ENCODE measurements at regions of chr19 and their contacts with region 1.

Region 1: GRCh38 chr19:42108527-42109389 is 23.5 kb downstream of the POU2F2 start:
- DNase-seq: peak; percentile 95
- H3K4me3 ChIP-seq: peak overlapping the region; percentile 46
- H3K27ac ChIP-seq: peak overlapping the region; percentile 87
- H3K4me1 ChIP-seq: peaks cover 60% of the 10 kb centered on the region
- CTCF ChIP-seq: peak; percentile 100

Region 2: DNA sequence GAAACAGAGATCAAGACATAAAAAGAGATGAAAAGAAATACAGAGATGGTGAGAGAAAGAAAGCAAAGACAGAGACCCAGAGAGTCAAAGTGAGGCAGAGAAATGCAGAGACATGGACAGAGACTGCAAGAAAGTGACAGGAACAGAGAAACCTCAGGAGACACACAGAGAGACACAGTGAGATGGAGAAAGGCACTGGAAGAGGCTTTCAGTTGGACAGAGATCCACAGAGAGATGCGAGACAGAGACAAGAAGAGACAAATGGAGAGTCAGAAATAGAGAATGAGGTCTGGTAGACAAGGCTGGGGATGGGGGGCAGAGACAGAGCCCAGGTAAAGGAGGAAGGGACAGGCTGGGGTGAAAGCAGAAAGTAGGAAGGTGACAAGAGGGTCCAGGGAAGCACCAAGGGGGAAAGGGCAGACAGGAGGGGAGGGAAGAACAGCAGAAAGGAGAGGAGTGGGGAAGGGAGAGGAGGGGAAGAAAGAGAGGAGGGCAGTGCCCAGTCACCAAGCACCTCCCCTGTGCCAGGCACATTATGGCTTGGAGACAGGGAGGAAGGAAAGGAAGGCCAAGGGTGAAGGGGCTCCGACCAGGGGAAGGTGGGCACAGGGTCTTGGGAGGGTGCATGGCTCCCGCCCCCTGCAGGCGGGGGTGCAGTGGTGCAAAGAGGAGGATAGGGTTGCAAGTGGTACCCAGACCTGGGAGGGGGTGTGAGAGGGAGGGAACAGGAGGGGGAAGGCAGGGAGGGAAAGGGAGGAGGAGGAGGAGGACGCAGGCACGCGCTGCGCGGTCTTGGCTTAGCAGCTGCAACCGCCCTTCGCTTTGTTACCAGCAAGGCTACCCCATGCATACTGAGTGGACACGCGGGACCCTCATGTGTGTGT is 70.3 kb after region 1 on chr19:
- CTCF ChIA-PET with region 1: interaction called, 5 read pairs
- POLR2A ChIA-PET with region 1: no interaction called
- intact Hi-C with region 1: loop called (anchors 1 kb)
- DNase-seq: peak; percentile 56
- H3K4me3 ChIP-seq: no peak overlapping the region
- H3K27ac ChIP-seq: no peak overlapping the region
- H3K4me1 ChIP-seq: peaks cover 48% of the 10 kb centered on the region
- CTCF ChIP-seq: peak; percentile 76

Region 3: DNA sequence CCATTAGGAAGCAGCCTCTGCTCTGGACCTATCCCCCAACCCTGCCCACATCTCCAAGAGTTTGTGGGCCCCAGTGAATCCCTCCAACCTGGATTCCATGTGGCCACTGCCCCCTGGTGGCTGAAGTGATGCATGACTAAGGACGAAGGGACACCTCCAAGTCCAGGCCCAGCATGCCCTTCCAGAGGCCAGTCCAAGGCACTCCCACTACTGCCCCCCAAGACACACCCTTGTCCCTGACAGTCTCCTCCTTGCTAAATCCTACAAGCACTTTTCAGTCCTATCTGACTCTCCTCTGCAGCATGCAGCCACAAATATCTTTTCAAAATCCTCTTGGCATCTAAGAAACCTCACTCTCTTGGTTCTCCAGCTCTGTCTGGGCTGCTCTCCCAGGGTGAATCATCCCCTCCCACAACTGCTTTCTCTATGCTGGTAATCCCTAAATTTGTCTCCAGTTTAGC is 75.7 kb after region 1 on chr19:
- CTCF ChIA-PET with region 1: no interaction called
- POLR2A ChIA-PET with region 1: no interaction called
- intact Hi-C with region 1: loop called (anchors 1 kb)
- DNase-seq: peak; percentile 82
- H3K4me3 ChIP-seq: no peak overlapping the region
- H3K27ac ChIP-seq: no peak overlapping the region
- H3K4me1 ChIP-seq: peaks cover 39% of the 10 kb centered on the region
- CTCF ChIP-seq: peak; percentile 99

Region 4: DNA sequence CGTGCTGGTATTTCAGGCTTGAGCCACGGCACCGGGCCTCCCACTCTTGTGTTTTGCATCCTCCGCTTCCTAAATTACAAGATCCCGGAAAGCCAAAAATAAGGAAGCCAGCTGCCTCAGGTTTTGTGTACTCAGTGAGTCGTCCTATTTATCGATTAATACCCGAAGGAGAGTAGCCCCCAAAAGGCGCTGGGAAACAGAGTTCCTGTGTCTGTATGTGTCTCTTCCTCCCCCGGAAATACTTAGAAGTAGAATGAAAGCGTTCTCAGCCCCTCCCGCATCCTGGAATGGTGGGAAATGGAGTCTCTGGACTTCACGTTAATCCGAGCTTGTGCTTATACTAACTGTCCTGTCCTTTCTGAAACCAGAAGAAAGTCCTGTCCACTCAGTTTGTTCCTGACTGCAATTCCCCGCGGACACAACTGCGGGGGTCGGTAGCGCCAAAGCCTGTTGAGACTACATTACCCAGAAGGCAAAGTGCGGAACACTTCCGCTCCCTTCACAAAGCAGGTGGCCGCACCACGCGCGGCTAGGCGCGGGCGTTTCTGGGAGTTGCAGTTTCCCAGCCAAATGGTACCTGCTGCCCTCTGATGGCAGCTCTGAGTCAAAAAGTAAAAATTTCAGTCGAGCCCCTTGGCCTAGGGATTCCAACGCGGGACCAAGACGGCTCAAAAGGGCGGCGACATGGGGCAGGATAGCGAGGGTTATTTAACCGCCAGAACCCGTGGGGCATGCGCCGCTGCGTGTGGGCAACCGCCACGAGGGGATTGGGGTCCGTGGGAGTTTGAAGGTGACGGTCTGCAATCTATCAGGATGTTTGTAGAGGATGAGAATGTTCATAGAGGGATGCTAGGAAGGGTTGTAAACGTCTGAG is 135.8 kb after region 1 on chr19:
- CTCF ChIA-PET with region 1: interaction called, 3 read pairs
- POLR2A ChIA-PET with region 1: no interaction called
- intact Hi-C with region 1: loop called (anchors 2 kb)
- DNase-seq: peak; percentile 96
- H3K4me3 ChIP-seq: peak overlapping the region; percentile 92
- H3K27ac ChIP-seq: peak overlapping the region; percentile 77
- H3K4me1 ChIP-seq: peaks cover 33% of the 10 kb centered on the region
- CTCF ChIP-seq: peak; percentile 81

Region 5: GRCh38 chr19:42283143-42284065 is 174.6 kb after region 1 on chr19:
- CTCF ChIA-PET with region 1: no interaction called
- POLR2A ChIA-PET with region 1: no interaction called
- intact Hi-C with region 1: loop called (anchors 1 kb)
- DNase-seq: peak; percentile 97
- H3K4me3 ChIP-seq: peak overlapping the region; percentile 69
- H3K27ac ChIP-seq: peak overlapping the region; percentile 82
- H3K4me1 ChIP-seq: peaks cover 59% of the 10 kb centered on the region
- CTCF ChIP-seq: peak; percentile 33; the same call in 1 of the 2 replicates

Region 6: DNA sequence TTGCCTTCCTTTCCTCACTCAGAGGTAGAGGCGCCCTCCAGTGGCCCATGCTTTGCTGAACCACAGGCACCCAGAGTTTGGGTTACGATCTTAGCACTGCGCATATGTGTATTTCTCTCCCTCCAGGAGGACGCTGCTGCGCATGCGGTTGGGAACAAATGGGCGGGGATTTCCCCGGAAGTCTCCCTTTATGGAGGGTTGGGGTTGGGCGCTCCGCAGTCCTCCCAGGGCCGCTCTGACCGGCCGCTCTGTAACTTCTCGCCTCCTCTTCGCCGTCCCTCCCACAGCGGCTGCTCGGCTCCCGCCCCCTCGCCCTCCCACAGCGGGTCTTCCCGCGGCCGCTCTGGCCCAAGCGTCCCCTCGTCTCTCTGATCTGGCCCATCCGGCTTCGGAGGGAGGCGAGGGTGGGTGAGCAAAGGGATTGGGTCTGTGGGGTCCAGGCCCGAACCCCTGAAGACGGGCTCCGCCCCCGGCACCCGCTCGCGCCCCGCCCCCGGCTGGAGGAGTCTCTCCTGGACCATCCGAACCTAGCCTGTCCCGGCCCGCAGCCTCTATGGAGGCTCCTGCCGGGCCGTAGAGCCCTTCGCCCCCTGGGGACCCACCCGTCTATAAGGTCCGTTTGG is 216.6 kb after region 1 on chr19 and contains the start of gene MEGF8:
- CTCF ChIA-PET with region 1: no interaction called
- POLR2A ChIA-PET with region 1: no interaction called
- intact Hi-C with region 1: loop called (anchors 1 kb)
- DNase-seq: peak; percentile 99
- H3K4me3 ChIP-seq: peak within 1 kb of the TSS; percentile 91
- H3K27ac ChIP-seq: peak within 1 kb of the TSS; percentile 47
- H3K4me1 ChIP-seq: peaks cover 25% of the 10 kb centered on the region
- CTCF ChIP-seq: peak; percentile 96
- total RNA-seq, gene MEGF8: 6.0 and 10.5 TPM in 2 replicates